ENCODE measurements at regions of chr1 and their contacts with region 1.

Region 1: DNA sequence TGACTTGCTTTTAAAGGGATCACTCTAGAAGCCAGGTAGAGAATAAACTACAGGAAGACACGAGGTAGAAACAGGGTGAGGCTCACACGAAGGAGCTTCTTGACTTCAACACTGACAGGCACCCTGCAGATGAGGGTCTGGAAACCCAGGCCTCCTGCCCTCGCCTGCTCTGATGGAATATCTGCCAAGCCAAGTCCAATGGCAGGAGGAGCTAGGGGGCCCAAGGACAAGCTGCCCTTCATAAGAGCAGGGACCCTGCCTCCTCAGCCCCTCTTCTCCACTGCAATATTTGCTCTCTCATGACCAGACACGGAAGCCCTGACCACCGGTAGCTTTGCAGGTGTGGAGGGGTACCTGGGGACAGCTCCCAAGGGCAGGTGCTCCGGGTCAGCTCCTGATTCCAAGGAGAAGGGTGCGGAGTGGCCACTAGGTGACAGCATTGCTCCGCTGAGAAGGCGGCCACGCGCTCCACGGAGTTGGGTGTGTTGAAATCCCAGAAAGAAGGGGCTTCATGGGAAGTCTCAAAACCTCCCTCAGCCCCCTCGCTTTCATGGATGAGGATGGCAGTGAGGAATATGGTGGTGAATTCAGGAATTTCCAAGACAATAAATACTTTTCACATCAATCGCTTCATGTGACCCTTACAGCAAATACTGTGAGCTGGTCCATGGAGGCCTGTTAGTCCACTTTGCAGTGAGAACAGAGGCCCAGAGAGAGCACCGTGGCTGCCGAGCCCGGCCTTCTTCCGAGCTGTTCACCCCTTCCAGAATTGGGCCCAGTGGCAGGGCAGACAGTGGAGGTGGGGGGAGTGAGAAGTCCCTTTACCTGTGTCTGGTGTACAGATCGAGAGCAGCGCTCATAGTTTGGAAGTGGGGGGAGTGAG is 33.2 kb upstream of the PAX7 start:
- H3K4me3 ChIP-seq: no peak overlapping the region
- H3K27ac ChIP-seq: no peak overlapping the region
- H3K4me1 ChIP-seq: no peaks in the 10 kb centered on the region
- CTCF ChIP-seq: peak; percentile 95

Region 2: GRCh38 chr1:18032172-18032859 is 565.1 kb before region 1 on chr1:
- CTCF ChIA-PET with region 1: no interaction called
- POLR2A ChIA-PET with region 1: no interaction called
- H3K4me3 ChIP-seq: no peak overlapping the region
- H3K27ac ChIP-seq: no peak overlapping the region
- H3K4me1 ChIP-seq: no peaks in the 10 kb centered on the region
- CTCF ChIP-seq: no peak

Region 3: GRCh38 chr1:18530587-18531502 is 66.6 kb before region 1 on chr1:
- CTCF ChIA-PET with region 1: no interaction called
- POLR2A ChIA-PET with region 1: no interaction called
- H3K4me3 ChIP-seq: no peak overlapping the region
- H3K27ac ChIP-seq: no peak overlapping the region
- H3K4me1 ChIP-seq: no peaks in the 10 kb centered on the region
- CTCF ChIP-seq: peak; percentile 61

Region 4: GRCh38 chr1:18608534-18608933 is 11.1 kb after region 1 on chr1:
- CTCF ChIA-PET with region 1: interaction called, 11 read pairs
- POLR2A ChIA-PET with region 1: no interaction called
- H3K4me3 ChIP-seq: no peak overlapping the region
- H3K27ac ChIP-seq: no peak overlapping the region
- H3K4me1 ChIP-seq: no peaks in the 10 kb centered on the region
- CTCF ChIP-seq: no peak

Region 5: GRCh38 chr1:18820791-18821641 is 223.6 kb after region 1 on chr1:
- CTCF ChIA-PET with region 1: interaction called, 90 read pairs
- POLR2A ChIA-PET with region 1: no interaction called
- H3K4me3 ChIP-seq: no peak overlapping the region
- H3K27ac ChIP-seq: no peak overlapping the region
- H3K4me1 ChIP-seq: no peaks in the 10 kb centered on the region
- CTCF ChIP-seq: peak; percentile 87

Region 6: GRCh38 chr1:18875107-18875795 is 277.9 kb after region 1 on chr1:
- CTCF ChIA-PET with region 1: interaction called, 37 read pairs
- POLR2A ChIA-PET with region 1: no interaction called
- H3K4me3 ChIP-seq: no peak overlapping the region
- H3K27ac ChIP-seq: no peak overlapping the region
- H3K4me1 ChIP-seq: 0 out of 2 replicates have a peak, but pooled peaks cover 2% of the 10 kb centered on the region
- CTCF ChIP-seq: peak; percentile 93